Thyroid gland (tissue), 4 donors: ENCODE measurements at regions of chr15 and their contacts with region 1.

Region 1: DNA sequence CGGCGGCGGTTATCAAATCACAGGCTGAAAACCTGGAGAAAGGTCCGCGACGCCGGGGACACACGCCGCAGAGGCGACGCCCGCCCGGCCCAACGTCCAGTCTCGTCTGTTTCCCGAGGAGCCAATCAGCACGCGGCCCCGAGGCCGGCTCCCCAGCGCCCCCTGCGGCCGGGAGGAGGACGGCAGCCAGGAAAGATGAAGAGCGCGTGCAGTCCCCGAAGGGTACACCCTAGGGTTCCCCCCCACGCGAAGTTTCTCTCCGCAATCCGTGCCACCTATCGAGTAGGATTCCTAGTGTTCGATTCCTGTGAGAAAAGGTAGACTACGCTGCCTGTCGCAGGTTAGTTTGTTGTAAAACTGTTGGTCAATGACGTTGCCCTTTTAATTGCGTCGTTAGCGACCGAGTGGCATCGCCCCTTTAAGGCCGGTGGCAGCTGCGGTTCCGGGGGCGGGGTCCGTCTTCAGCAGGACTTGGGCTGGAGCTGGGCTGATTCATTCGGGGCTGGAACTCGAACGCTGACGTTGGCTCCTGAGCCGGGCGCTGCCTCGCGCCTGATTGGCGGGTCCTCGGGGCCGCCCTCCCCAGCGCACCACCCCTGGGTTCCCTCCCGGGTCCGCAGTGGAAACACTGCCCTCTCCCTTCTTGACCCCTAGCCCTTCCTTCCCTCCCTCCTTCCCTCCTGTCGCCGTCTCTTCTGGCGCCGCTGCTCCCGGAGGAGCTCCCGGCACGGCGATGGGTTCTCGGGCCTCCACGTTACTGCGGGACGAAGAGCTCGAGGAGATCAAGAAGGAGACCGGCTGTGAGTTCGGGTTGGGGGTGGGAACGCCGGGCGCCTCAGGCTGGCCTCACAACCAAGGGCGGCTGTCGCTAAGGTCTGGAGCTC is at the starts of genes CHP1 and EXD1:
- DNase-seq: peak; percentile 99
- H3K4me3 ChIP-seq: peak within 1 kb of the TSS; percentile 63 to 97 (median 74)
- H3K27ac ChIP-seq: peak within 1 kb of the TSS; percentile 71 to 86 (median 76)
- H3K4me1 ChIP-seq: peaks cover 9 to 13% of the 10 kb centered on the region in 2 donors
- H3K27me3 ChIP-seq: no peaks in the 10 kb centered on the region
- CTCF ChIP-seq: peak; percentile 88 to 95 (median 93)
- POLR2A ChIP-seq: peak in 1 of 2 donors; percentile 81
- total RNA-seq, gene CHP1: 163 to 347 (median 248) TPM
- total RNA-seq, gene EXD1: 0.13 TPM in 1 of 4 donors, not detected in the others

Region 2: DNA sequence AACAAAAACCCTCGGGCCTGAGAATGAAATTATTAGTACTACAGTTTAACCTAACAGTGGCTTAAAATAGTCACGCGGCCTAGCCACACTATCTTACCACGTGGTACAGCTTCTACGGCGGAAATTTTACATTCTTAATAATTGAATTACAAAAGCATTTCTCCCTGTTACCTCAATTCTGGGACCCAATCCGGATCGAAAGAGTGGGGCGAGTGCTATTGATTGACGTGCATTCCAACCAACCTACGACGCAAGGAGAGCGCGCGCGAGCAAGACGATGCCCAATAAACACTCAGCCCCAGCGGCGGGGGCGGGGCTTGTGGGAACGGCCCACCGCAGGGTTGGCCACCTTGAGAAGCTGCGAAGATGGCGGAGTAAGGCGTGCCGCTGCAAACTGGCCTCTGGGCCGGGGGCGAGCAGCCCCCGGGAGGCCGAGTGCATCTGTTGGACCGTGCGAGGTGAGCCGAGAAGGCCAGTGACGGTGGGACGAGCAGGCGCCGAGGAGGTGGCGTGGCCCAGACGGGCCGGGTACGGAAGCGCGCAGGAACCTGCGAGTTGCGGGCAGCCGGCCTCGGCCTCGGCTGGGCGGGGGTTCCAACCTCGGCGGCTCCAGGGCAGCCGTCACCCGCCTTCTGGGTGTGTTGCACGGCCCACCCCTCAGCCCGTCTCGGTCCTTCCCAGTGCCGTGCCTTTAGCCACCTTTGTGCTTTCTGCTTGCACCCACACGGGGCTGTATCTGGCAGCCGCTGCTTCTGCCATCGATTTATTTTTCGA is 52.9 kb after region 1 on chr15:
- intact Hi-C with region 1: loop called (anchors 10 kb)
- DNase-seq: peak; percentile 98 to 99
- H3K4me3 ChIP-seq: peak overlapping the region; percentile 7 to 100 (median 80)
- H3K27ac ChIP-seq: peak overlapping the region; percentile 65 to 92 (median 91)
- H3K4me1 ChIP-seq: peaks cover 6 to 12% of the 10 kb centered on the region in 2 donors
- H3K27me3 ChIP-seq: no peaks in the 10 kb centered on the region
- CTCF ChIP-seq: no peak
- POLR2A ChIP-seq: peak; percentile 41 to 95

Region 3: DNA sequence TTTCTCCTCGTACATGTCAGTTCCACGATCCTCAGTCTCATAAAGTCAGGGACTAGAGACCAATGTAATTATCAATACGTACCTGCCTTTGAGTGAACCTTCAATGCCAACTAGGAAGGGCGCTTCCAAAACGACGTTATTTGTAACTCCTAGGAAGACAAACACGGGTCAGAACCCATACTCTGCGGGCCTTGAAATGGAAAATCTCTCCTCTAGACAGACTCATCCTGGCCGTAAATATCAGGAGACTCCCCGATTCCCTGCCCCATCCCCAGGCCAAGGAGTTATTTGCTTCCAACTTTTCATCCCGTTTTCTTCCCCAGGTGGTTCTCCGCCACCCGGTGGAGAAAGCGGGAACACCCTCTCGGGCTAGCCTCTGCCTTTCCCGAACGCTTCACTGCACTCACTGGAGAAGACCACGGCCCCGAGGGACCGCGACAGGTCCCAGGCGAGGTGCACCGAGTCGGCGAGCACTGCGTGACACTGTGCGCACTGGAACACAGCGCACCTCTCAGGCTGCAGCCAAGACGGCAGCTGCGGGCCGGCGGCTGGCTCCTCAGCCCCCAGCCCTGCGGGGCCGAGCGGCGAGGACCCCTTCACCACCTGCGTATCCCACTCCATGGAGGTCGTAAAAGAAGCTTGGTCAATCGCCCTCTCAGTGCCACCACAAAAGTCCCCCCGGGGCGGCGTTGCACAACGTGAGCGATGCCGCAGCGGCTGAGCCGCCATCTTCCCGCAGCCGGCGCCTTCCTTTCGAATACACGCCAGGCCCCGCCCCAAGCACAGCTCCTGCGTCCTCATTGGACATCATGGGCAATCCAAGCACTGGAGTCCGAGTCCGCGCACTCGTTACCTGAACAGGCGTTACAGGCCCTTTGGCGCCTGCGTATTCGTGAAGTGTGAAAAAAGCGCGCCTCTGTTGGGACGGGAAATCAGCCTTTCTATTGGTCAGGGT is 101.2 kb after region 1 on chr15 and contains the start of gene OIP5:
- intact Hi-C with region 1: loop called (anchors 10 kb)
- DNase-seq: peak; percentile 99
- H3K4me3 ChIP-seq: peak within 1 kb of the TSS; percentile 38 to 89 (median 42)
- H3K27ac ChIP-seq: no peak within 1 kb of the TSS
- H3K4me1 ChIP-seq: peaks cover 6 to 17% of the 10 kb centered on the region in 2 donors
- H3K27me3 ChIP-seq: no peaks in the 10 kb centered on the region
- CTCF ChIP-seq: peak; percentile 50 to 74 (median 70)
- POLR2A ChIP-seq: no peak
- total RNA-seq, gene OIP5: 0.78 to 1.6 TPM in 2 of 4 donors, not detected in the others

Region 4: GRCh38 chr15:41640985-41641384 is 410.1 kb after region 1 on chr15:
- intact Hi-C with region 1: no loop called
- DNase-seq: no peak
- H3K4me3 ChIP-seq: no peak overlapping the region
- H3K27ac ChIP-seq: no peak overlapping the region
- H3K4me1 ChIP-seq: no peaks in the 10 kb centered on the region
- H3K27me3 ChIP-seq: no peaks in the 10 kb centered on the region
- CTCF ChIP-seq: no peak
- POLR2A ChIP-seq: no peak